Activated naive CD4-positive, alpha-beta T cell treated with anti-CD3 and anti-CD28 coated beads, Interleukin-2, amount 10 ng/mL, durations not matched to agents 7 days and 5 days (primary cell): ENCODE measurements at regions of chr6 and their contacts with region 1.

Region 1: DNA sequence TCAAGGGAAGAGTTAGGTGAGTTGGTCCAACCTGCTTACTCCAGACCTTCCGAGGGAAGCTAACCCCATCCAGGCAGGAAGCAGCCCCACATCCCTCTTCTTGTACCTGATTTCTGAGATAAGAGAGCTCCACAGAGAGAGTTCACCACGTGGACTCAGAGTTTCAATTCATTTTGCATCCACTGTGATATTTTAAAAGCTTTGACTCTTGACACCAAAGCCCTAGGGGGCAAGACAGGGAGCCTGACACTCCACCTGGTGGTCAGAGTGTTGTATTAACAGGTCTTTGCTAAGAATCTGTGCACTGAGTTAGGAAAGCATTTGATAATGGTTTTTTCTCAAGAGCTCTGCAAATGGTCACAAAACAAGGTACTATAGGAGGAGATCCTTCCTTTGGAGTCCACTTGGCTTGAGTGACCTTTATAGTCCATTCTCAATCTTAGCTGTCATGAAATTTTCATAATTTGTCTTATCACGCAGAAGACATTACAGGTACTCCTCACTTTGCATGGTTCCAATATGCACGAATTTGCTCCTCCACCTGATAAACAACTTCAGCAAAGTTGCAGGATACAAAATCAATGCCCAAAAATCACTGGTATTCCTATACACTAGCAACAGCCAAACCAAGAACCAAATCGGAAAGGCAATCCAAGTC is 56.2 kb upstream of the RIPOR2 start:
- DNase-seq: peak; percentile 86
- H3K4me3 Mint-ChIP-seq: peak overlapping the region; percentile 15
- H3K27ac Mint-ChIP-seq: peak overlapping the region; percentile 85
- H3K4me1 Mint-ChIP-seq: peaks cover 65% of the 10 kb centered on the region
- H3K27me3 Mint-ChIP-seq: no peaks in the 10 kb centered on the region

Region 2: DNA sequence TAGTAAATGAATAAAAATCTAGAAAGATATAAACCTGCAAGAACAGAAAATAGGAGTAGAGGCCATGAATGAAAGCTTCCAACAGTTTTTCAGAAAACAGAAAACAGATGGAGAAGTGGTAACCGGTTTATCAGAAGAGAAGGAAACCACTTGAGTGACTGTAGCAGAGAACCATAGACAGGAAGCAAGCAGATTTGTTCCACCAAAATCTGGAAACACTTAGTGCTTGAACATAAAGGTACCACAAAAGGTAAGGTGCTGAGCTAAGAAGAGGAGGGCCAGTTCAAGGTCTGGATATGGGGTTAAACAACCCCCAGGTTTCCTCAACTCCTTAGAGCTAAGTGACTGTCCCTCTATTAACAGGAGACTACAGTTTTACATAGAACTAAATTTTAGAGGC is 336.7 kb before region 1 on chr6:
- CTCF ChIA-PET with region 1: no interaction called
- DNase-seq: no peak
- H3K4me3 Mint-ChIP-seq: no peak overlapping the region
- H3K27ac Mint-ChIP-seq: no peak overlapping the region
- H3K4me1 Mint-ChIP-seq: peaks cover 22% of the 10 kb centered on the region
- H3K27me3 Mint-ChIP-seq: no peaks in the 10 kb centered on the region

Region 3: GRCh38 chr6:24848461-24848860 is 143.5 kb before region 1 on chr6:
- CTCF ChIA-PET with region 1: no interaction called
- DNase-seq: no peak
- H3K4me3 Mint-ChIP-seq: no peak overlapping the region
- H3K27ac Mint-ChIP-seq: peak overlapping the region; percentile 11
- H3K4me1 Mint-ChIP-seq: peaks cover 31% of the 10 kb centered on the region
- H3K27me3 Mint-ChIP-seq: no peaks in the 10 kb centered on the region

Region 4: GRCh38 chr6:24899997-24900325 is 92.0 kb before region 1 on chr6:
- CTCF ChIA-PET with region 1: interaction called, 24 read pairs
- DNase-seq: peak; percentile 50
- H3K4me3 Mint-ChIP-seq: no peak overlapping the region
- H3K27ac Mint-ChIP-seq: peak overlapping the region; percentile 77
- H3K4me1 Mint-ChIP-seq: peaks cover 87% of the 10 kb centered on the region
- H3K27me3 Mint-ChIP-seq: no peaks in the 10 kb centered on the region

Region 5: GRCh38 chr6:24919004-24919892 is 72.7 kb before region 1 on chr6:
- CTCF ChIA-PET with region 1: interaction called, 52 read pairs
- DNase-seq: peak; percentile 58
- H3K4me3 Mint-ChIP-seq: peak overlapping the region; percentile 43
- H3K27ac Mint-ChIP-seq: peak overlapping the region; percentile 85
- H3K4me1 Mint-ChIP-seq: peaks cover 96% of the 10 kb centered on the region
- H3K27me3 Mint-ChIP-seq: no peaks in the 10 kb centered on the region

Region 6: GRCh38 chr6:24933868-24934401 is 58.0 kb before region 1 on chr6:
- CTCF ChIA-PET with region 1: interaction called, 176 read pairs
- DNase-seq: peak; percentile 69
- H3K4me3 Mint-ChIP-seq: peak overlapping the region; percentile 98
- H3K27ac Mint-ChIP-seq: peak overlapping the region; percentile 99
- H3K4me1 Mint-ChIP-seq: peaks cover 47% of the 10 kb centered on the region
- H3K27me3 Mint-ChIP-seq: peaks cover 4% of the 10 kb centered on the region

Region 7: DNA sequence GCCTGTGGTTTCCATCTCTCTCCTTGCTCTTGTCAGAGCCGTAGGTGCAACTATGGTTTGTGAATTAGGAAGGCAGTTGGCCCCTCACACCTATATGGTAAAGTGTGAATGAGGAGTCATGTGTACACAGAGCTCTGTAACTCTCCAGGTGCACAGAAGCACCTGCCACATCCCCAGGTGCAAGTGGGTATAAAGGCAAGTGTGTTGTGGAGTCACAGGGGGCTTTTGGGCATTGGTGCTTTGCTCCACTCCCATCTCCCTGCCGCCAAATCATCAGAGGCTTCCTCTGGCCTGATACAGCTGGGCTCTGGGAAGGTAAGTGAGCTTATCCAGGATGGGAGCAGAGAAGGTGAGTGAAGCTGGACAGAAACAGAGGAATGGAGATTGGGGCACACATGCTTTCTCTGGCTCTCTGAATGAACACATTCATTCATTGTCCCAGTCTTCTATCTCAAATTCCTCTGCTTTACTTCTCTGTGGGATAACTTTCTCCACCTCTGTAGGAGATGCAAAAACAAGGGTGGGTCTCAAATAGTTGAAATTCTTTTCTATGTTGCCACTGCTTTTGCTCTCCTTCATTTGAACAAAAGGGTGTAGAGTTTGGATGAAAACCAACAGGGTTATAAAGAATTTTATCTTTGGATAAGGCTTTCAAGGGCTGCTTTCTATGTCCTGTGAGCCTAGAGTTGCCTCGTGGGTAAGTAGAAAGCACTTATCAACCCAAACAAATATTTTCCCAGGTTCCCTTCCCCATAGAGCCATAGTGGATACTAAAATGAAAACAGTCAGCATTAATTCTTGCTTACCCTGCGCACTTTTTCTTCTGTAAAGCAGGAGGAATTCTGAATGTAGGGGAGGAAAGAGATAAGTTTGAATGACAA is 11.2 kb before region 1 on chr6:
- CTCF ChIA-PET with region 1: interaction called, 20 read pairs
- DNase-seq: no peak
- H3K4me3 Mint-ChIP-seq: no peak overlapping the region
- H3K27ac Mint-ChIP-seq: no peak overlapping the region
- H3K4me1 Mint-ChIP-seq: peaks cover 24% of the 10 kb centered on the region
- H3K27me3 Mint-ChIP-seq: no peaks in the 10 kb centered on the region

Region 8: DNA sequence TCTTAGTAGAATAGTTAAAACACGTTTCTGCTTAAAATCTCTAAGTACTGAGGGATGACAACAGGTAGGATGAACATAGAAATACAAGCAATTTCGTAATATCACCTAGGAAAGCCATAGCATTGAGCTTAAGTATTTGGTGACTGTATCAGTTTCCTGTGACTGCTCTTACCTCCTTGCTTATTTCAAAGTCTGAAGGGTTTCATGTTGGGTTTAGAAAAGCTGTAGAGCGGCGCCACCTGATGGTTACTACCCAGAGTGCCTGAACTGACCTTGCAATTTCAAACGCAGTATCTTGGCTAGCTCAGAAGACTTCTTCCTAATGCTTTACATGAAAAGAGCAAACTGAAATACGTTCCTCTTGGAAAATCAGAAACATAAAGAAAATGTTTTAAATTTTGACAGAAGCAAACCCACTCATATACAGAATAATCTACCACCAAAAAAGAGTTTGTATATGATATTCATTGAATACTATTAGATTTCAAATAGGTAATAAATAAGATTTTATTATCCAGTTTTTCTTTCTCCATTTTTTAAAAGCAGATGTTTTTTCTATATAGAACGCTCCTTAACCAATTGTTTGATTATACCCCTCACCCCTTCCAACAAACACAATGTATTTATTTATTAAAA is 26.1 kb after region 1 on chr6:
- CTCF ChIA-PET with region 1: interaction called, 25 read pairs
- DNase-seq: peak; percentile 90
- H3K4me3 Mint-ChIP-seq: peak overlapping the region; percentile 17
- H3K27ac Mint-ChIP-seq: peak overlapping the region; percentile 33
- H3K4me1 Mint-ChIP-seq: peaks cover 52% of the 10 kb centered on the region
- H3K27me3 Mint-ChIP-seq: no peaks in the 10 kb centered on the region

Region 9: DNA sequence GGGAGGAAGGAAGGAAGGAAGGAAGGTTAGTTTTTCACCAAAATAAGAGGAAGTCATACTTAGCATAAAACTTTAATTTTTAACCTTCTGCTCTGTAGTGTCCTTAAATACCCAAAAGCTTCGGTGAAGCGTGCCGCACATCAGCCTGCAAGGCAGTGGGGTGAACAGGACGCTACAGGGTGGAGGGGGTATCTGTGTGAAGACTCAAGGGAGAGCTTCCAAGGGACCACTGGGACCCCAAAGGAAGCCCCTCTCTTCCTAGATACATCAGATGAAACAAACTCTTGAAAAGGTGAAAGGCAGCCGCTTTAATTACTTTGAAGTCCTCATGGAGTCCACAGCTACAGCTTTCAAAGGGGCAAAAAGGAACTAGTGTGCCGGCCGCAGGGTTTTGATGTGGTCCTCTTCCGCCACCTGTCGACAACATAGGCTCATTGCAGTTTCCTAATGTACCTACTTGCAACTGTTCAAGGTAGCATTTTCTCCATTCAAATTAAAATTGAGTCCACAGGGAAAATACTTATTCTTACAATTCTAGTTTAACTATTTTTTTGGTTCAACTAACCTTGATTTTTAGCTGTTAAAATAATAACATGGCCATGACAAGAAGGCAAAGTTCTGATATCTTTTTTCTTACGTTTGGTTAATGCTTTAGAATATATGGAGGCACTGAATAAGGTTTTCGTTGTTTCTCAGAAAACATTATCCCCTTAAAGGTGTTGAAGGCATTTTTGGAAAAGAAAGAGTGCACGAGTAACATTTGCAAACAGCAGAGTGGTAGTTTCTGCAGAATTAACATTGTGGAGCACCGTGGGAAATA is 78.8 kb after region 1 on chr6:
- CTCF ChIA-PET with region 1: interaction called, 15 read pairs
- DNase-seq: peak; percentile 86
- H3K4me3 Mint-ChIP-seq: peak overlapping the region; percentile 21
- H3K27ac Mint-ChIP-seq: peak overlapping the region; percentile 91
- H3K4me1 Mint-ChIP-seq: peaks cover 11% of the 10 kb centered on the region
- H3K27me3 Mint-ChIP-seq: peaks cover 7% of the 10 kb centered on the region